ENCODE measurements at regions of chr2 and their contacts with region 1.

Region 1: DNA sequence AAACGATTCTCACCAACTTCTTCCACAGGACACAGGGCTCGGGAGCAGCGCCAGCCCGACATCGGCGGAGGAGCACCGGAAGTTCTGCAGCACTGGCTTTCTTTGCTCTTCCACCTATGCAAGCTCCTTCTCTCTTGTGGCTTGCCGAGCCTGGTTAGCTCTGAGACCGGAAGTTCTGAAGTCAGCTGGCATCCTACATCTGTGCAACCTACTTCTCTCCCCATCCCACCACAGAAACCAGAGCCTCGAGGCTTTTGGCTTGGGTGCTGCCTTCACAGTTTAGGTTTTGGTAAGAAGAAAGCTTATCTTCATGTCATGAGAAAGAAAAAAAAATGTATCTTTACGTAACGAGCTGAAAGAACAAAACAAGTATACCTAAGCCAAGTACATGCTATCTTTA is 111.7 kb downstream of the ANKRD44 start:
- DNase-seq: peak; percentile 90
- H3K4me3 Mint-ChIP-seq: peak overlapping the region; percentile 87
- H3K27ac Mint-ChIP-seq: peak overlapping the region; percentile 98
- H3K4me1 Mint-ChIP-seq: peaks cover 91% of the 10 kb centered on the region
- H3K27me3 Mint-ChIP-seq: peaks cover 2% of the 10 kb centered on the region

Region 2: DNA sequence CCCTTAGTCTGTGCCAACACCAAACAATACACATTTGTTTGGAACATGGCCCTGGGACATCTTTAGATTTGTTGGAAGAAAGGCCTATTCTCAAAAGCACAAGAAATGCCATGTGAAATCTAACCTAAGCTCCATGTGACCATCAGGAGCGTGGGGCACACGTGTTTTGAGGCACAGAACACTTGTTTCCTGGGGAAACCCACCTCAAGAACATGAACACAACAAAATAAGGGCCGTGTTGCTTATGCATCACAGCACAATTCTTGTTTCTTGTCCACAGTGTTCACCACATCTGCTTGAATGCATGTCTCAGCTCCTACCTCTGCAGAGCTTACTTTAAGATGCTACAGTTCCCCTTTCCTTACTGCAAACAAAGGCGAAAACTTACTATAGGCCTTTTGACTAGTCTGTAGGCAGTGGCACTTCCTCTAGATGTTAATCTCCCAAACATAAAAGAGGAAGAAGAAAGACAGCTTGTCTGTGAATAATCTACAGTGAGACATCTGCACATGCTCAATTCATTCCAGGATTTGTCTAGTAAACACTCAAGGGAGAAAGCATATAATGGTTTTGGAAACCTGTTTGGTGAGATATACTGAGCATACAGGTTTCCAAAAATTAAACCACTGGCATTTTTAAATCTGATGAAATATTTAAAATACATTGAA is 53.3 kb before region 1 on chr2:
- intact Hi-C with region 1: loop called (anchors 2 kb)
- DNase-seq: no peak
- H3K4me3 Mint-ChIP-seq: no peak overlapping the region
- H3K27ac Mint-ChIP-seq: peak overlapping the region; percentile 87
- H3K4me1 Mint-ChIP-seq: peaks cover 68% of the 10 kb centered on the region
- H3K27me3 Mint-ChIP-seq: no peaks in the 10 kb centered on the region

Region 3: DNA sequence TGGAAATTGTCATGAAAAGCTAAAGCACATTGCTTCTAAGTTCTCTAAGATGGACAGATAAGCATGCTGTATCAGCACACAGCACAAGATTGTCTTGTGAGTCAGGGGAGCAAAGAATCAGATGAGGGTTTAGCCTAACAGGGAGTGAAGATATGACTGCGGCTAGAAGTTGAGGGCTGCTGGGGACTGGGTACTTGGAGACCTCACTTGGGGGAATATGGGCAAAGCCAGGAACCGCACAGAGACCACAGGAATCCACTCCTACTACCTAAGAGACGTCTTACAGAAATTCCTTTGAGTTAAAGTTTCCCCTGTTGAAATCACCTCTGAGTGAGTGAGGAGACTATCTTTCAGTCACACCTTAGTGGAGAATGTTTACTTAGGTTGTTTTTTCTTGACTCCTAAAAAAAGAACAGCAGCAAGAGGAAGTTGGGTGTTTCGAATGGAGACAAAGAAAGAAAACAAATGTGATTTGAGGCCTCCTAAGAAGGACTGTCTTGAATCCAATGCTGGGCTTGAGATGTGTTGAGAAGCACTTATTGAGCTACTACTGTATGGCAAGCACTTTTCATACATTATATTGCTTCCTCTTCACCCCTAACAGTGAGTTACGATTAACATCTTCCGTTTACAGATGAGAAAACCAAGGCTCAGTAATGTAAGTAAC is 11.0 kb after region 1 on chr2:
- intact Hi-C with region 1: loop called (anchors 1 kb)
- DNase-seq: peak; percentile 53
- H3K4me3 Mint-ChIP-seq: peak overlapping the region; percentile 69
- H3K27ac Mint-ChIP-seq: peak overlapping the region; percentile 97
- H3K4me1 Mint-ChIP-seq: peaks cover 95% of the 10 kb centered on the region
- H3K27me3 Mint-ChIP-seq: no peaks in the 10 kb centered on the region

Region 4: GRCh38 chr2:197216361-197216979 is 17.6 kb after region 1 on chr2:
- intact Hi-C with region 1: loop called (anchors 2 kb)
- DNase-seq: no peak
- H3K4me3 Mint-ChIP-seq: peak overlapping the region; percentile 80
- H3K27ac Mint-ChIP-seq: peak overlapping the region; percentile 94
- H3K4me1 Mint-ChIP-seq: peaks cover 83% of the 10 kb centered on the region
- H3K27me3 Mint-ChIP-seq: no peaks in the 10 kb centered on the region

Measured in activated T-helper 1 cell treated with anti-CD3 and anti-CD28 coated beads, Interleukin-12 subunit alpha, Interleukin-12 subunit beta, Interleukin-2, Interleukin-4 antibody, amounts not matched to agents 30 ng/mL and 10 ng/mL and 1 ng/mL, durations not matched to agents 14 hours and 24 hours and 36 hours (primary cell).